Activated CD4-positive, alpha-beta memory T cell treated with anti-CD3 and anti-CD28 coated beads for 36 hours (primary cell): ENCODE measurements at regions of chr1 and their contacts with region 1.

Region 1: GRCh38 chr1:1307908-1308755 is at the starts of genes ACAP3 and PUSL1:
- DNase-seq: peak; percentile 91
- H3K4me3 Mint-ChIP-seq: peak within 1 kb of the TSS; percentile 81
- H3K27ac Mint-ChIP-seq: peak within 1 kb of the TSS; percentile 82
- H3K4me1 Mint-ChIP-seq: peaks cover 29% of the 10 kb centered on the region
- H3K27me3 Mint-ChIP-seq: no peaks in the 10 kb centered on the region
- total RNA-seq, gene ACAP3: 31.8 to 32.0 TPM
- total RNA-seq, gene PUSL1: 19.7 to 23.1 TPM

Region 2: DNA sequence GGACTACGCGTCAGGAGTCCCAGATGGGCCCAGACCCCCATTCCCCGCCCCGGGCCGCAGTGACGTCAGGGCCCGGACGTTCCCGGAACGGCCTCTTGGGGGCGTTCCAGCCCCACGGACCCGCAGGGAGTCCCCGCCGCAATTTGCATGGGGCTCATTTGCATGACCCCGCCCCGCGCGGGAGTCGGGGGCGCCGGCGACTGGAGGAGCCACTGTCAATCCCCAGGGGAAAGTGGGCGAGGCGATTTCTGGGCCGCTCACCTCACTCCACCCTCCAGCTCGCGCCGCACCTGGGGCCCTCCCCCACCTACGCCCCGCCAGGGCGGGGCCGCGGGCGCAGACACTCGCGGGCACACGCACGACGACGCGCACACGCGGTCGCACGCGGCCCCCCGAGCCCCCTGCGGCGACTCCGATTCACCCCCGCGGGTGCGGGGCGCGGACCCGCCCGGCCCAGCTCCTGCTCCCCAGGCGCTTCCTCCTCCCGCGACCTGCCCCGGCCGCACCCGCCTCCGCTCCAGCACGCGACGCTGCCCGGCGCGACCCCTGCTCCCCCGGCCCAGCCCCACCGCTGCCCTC is 275.0 kb before region 1 on chr1:
- CTCF ChIA-PET with region 1: no interaction called
- POLR2A ChIA-PET with region 1: no interaction called
- intact Hi-C with region 1: loop called (anchors 1 kb)
- DNase-seq: peak; percentile 95
- H3K4me3 Mint-ChIP-seq: no peak overlapping the region
- H3K27ac Mint-ChIP-seq: no peak overlapping the region
- H3K4me1 Mint-ChIP-seq: peaks cover 7% of the 10 kb centered on the region
- H3K27me3 Mint-ChIP-seq: peaks cover 26% of the 10 kb centered on the region

Region 3: GRCh38 chr1:1217621-1218523 is 90.3 kb before region 1 on chr1:
- CTCF ChIA-PET with region 1: no interaction called
- POLR2A ChIA-PET with region 1: no interaction called
- intact Hi-C with region 1: loop called (anchors 5 kb)
- DNase-seq: peak; percentile 84
- H3K4me3 Mint-ChIP-seq: peak overlapping the region; percentile 78
- H3K27ac Mint-ChIP-seq: peak overlapping the region; percentile 100
- H3K4me1 Mint-ChIP-seq: peaks cover 62% of the 10 kb centered on the region
- H3K27me3 Mint-ChIP-seq: no peaks in the 10 kb centered on the region

Region 4: GRCh38 chr1:1231400-1232223 is 76.5 kb before region 1 on chr1 and contains the start of gene SDF4:
- CTCF ChIA-PET with region 1: no interaction called
- POLR2A ChIA-PET with region 1: interaction called, 3 read pairs
- intact Hi-C with region 1: loop called (anchors 1 kb)
- DNase-seq: peak; percentile 98
- H3K4me3 Mint-ChIP-seq: peak within 1 kb of the TSS; percentile 94
- H3K27ac Mint-ChIP-seq: peak within 1 kb of the TSS; percentile 92
- H3K4me1 Mint-ChIP-seq: peaks cover 33% of the 10 kb centered on the region
- H3K27me3 Mint-ChIP-seq: no peaks in the 10 kb centered on the region
- total RNA-seq, gene SDF4: 302 to 305 TPM

Region 5: GRCh38 chr1:1273512-1274298 is 34.4 kb before region 1 on chr1 and contains the start of gene UBE2J2:
- CTCF ChIA-PET with region 1: no interaction called
- POLR2A ChIA-PET with region 1: no interaction called
- intact Hi-C with region 1: loop called (anchors 5 kb)
- DNase-seq: peak; percentile 96
- H3K4me3 Mint-ChIP-seq: peak within 1 kb of the TSS; percentile 88
- H3K27ac Mint-ChIP-seq: peak within 1 kb of the TSS; percentile 62
- H3K4me1 Mint-ChIP-seq: peaks cover 32% of the 10 kb centered on the region
- H3K27me3 Mint-ChIP-seq: no peaks in the 10 kb centered on the region
- total RNA-seq, gene UBE2J2: 58.7 to 61.6 TPM

Region 6: GRCh38 chr1:1349256-1350012 is 41.3 kb after region 1 on chr1 and contains the start of gene DVL1:
- CTCF ChIA-PET with region 1: no interaction called
- POLR2A ChIA-PET with region 1: no interaction called
- intact Hi-C with region 1: loop called (anchors 1 kb)
- DNase-seq: peak; percentile 72
- H3K4me3 Mint-ChIP-seq: peak within 1 kb of the TSS; percentile 74
- H3K27ac Mint-ChIP-seq: no peak within 1 kb of the TSS
- H3K4me1 Mint-ChIP-seq: peaks cover 22% of the 10 kb centered on the region
- H3K27me3 Mint-ChIP-seq: peaks cover 25% of the 10 kb centered on the region
- total RNA-seq, gene DVL1: 37.6 to 38.6 TPM

Region 7: GRCh38 chr1:1374929-1375662 is 67.0 kb after region 1 on chr1 and contains the start of gene AURKAIP1:
- CTCF ChIA-PET with region 1: interaction called, 4 read pairs
- POLR2A ChIA-PET with region 1: no interaction called
- intact Hi-C with region 1: loop called (anchors 5 kb)
- DNase-seq: peak; percentile 98
- H3K4me3 Mint-ChIP-seq: peak within 1 kb of the TSS; percentile 87
- H3K27ac Mint-ChIP-seq: peak within 1 kb of the TSS; percentile 90
- H3K4me1 Mint-ChIP-seq: peaks cover 18% of the 10 kb centered on the region
- H3K27me3 Mint-ChIP-seq: no peaks in the 10 kb centered on the region
- total RNA-seq, gene AURKAIP1: 124 to 131 TPM